ENCODE measurements at regions of chr11 and their contacts with region 1.

Region 1: DNA sequence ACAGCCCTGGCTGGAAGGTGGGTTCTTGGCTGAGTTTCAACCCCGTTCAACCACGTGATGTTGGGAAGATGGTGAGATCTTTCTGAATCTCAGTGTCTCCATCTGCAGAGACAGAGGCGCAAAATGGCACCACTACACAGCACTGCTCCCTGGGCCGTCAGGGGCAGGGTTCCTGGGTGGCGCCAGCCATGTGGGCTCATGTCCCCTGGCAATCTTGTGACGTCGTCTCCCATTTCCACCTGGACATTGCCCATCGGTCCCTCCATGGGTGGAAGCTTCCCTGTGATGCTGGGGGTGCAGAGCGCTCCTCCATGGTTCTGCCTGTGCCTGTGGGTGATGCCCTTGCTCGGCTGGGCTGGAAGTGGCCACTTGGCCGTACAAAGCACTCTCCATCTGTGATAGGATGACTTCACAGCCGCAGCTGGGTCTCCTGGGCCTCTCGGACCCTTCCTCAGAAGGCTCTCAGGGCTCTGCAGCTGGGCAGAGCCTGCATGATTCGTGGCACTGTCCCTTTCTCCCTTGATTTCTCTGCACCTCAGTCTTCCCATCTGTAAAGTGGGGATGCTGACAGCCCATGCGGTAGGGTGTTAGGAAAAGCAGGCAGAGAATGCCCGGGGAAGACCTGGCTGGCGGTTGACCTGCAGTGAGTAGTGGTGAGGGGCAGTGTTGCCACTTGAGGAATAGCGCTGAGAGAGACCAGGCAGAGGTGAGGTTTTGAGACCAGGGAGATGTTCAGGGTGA is 35.2 kb downstream of the SMIM38 start:
- DNase-seq: no peak
- ATAC-seq: no peak

Region 2: GRCh38 chr11:69115586-69116560 is 75.1 kb before region 1 on chr11:
- intact Hi-C with region 1: loop called (anchors 2 kb)
- DNase-seq: no peak
- ATAC-seq: peak; percentile 46

Measured in sciatic nerve (tissue), 2 donors.